ENCODE measurements at regions of chr22 and their contacts with region 1.

Region 1: GRCh38 chr22:31995046-31995445 is 48.0 kb upstream of the SLC5A1 start:
- DNase-seq: no peak
- ATAC-seq: 0 out of 6 replicates have a peak, but pooled peaks of 1 of the 2 experiments have one; percentile 42
- H3K4me3 ChIP-seq: no peak overlapping the region
- H3K27ac ChIP-seq: no peak overlapping the region
- H3K4me1 ChIP-seq: no peaks in the 10 kb centered on the region
- CTCF ChIP-seq: no peak
- EP300 ChIP-seq: no peak
- POLR2A ChIP-seq: no peak
- RAD21 ChIP-seq: no peak

Region 2: DNA sequence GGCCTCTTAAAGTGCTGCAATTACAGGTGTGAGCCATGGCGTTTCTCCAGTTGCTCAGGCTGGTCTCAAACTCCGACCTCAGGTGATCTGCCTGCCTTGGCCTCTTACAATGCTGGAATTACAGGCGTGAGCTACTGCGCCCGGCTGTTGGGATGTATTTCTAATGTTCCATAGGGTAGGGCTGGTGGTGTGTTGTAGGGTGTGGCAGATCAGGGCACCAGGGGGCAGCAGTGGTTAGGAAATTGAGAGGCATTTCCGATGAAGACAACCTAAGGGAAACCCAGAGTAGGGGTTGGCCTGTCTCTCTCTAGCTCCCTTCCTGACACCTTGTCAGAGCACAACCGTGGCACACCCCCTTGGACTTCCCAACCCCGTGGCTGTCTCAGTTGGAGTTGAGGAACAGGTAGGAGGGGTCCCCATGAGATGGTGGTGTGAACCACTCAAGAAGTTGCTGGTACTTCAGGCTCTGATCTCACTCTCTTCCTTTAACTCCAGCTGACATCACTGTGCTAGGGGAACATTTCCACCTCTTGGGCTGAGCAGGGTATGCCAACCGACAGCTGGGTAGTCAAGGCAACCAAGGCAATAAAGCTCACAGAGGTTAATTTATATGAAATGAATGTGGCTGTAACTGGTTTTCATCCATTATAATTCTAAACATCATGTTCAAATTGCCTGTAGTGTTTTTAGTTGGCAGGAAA is 17.8 kb before region 1 on chr22:
- CTCF ChIA-PET with region 1: interaction called, 17 read pairs
- POLR2A ChIA-PET with region 1: no interaction called
- DNase-seq: peak; percentile 71 to 72
- ATAC-seq: peak; percentile 99
- H3K4me3 ChIP-seq: no peak overlapping the region
- H3K27ac ChIP-seq: no peak overlapping the region
- H3K4me1 ChIP-seq: peaks cover 7% of the 10 kb centered on the region; the same call in 1 of the 3 replicates
- CTCF ChIP-seq: peak; percentile 62
- EP300 ChIP-seq: no peak
- POLR2A ChIP-seq: no peak
- RAD21 ChIP-seq: peak; percentile 84 to 93

Measured in A549 (cell line).